ENCODE measurements at regions of chr3 and their contacts with region 1.

Region 1: DNA sequence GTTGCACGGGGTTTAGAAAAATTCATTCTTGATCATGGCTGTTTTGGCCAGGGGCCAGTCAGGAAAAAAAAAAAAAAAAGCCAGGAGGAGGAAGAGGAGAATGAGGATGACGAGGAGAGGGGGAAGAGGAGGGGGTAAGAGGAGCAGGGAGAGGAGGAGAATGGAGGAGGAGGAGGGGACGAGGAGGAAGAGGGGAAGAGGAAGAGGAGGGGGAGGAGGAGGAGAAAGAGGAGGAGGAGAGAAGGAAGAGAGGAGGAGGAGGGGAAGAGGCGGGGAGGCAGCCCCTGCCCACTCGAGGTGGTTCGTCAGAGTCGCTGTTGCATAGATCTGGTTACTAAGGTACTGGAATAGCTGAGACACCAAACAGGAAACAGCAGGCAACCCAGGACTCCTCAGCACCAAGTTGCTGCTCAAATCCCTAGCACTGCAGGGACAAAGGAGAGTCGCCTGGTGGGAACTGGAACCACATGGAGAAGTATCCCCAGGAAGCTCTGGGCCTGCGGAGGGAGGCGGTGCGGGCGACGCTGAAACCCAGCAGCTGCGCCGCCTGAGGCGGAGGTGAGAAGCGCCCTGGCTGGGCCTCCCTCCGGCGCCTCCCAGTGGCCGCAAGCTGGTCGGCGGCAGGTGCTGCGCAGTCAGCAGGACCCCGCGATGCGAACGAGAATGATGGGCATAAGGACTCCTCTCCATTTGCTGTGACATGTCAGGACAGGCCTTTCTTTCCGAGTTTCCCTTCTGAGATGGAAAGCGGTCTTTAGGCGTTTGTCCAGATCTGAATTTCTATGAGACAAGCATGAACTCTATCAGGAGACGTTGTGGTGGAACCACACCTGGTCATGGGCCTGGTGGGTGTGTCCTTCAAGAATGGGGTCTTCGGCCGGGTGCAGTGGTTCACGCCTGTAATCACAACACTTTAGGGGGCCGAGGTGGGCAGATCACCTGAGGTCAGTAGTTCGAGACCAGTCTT is 17.5 kb downstream of the FAM240A start:
- DNase-seq: peak; percentile 76
- ATAC-seq: peak; percentile 82
- H3K4me3 ChIP-seq: no peak overlapping the region
- H3K27ac ChIP-seq: peak overlapping the region; percentile 24
- H3K4me1 ChIP-seq: peaks cover 24% of the 10 kb centered on the region
- H3K27me3 ChIP-seq: no peaks in the 10 kb centered on the region; the same call in 1 of the 2 replicates
- CTCF ChIP-seq: peak; percentile 99
- POLR2A ChIP-seq: no peak
- RAD21 ChIP-seq: peak; percentile 82

Region 2: GRCh38 chr3:46496741-46497554 is 132.9 kb before region 1 on chr3:
- CTCF ChIA-PET with region 1: interaction called, 19 read pairs
- POLR2A ChIA-PET with region 1: interaction called, 3 read pairs
- dilution Hi-C with region 1: no loop called
- in situ Hi-C with region 1: no loop called
- intact Hi-C with region 1: no loop called
- DNase-seq: peak; percentile 46
- ATAC-seq: peak; percentile 38; the same call in 1 of the 2 replicates
- H3K4me3 ChIP-seq: no peak overlapping the region
- H3K27ac ChIP-seq: peak overlapping the region; percentile 82
- H3K4me1 ChIP-seq: peaks cover 29% of the 10 kb centered on the region
- H3K27me3 ChIP-seq: no peaks in the 10 kb centered on the region
- CTCF ChIP-seq: peak; percentile 43; the same call in 1 of the 2 replicates
- POLR2A ChIP-seq: no peak
- RAD21 ChIP-seq: peak; percentile 32; the same call in 1 of the 2 replicates

Region 3: DNA sequence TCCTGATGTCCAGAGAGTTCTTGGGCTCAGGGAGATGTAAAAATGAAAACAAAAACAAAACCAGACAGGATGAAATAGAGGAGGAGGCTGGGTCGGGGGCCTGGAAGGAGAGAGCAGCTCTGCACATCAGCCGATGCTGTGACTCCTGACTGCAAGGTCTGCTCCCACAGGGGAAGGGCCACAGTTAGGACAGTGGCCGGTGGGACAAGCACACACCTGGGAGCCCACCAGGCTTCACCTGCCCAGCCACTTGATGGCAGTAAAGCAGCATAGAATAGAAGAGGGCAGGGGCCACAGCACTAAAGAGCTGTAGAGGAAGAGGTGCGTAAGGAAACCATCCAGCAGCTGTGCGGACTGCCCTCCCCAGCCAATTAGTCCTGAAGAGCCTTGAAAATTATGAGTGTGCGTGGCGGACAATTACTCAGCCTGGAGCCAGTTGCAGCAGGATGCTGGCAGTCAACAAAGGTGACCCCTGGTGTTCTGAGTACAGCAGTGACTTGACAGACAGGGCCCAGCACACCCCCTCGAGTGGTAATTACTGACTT is 33.8 kb after region 1 on chr3:
- CTCF ChIA-PET with region 1: no interaction called
- POLR2A ChIA-PET with region 1: no interaction called
- dilution Hi-C with region 1: no loop called
- in situ Hi-C with region 1: no loop called
- intact Hi-C with region 1: no loop called
- DNase-seq: peak; percentile 46
- ATAC-seq: 0 out of 2 replicates have a peak, but pooled peaks have one; percentile 2
- H3K4me3 ChIP-seq: no peak overlapping the region
- H3K27ac ChIP-seq: peak overlapping the region; percentile 27; the same call in 1 of the 2 replicates
- H3K4me1 ChIP-seq: peaks cover 27% of the 10 kb centered on the region
- H3K27me3 ChIP-seq: peaks cover 3% of the 10 kb centered on the region; the same call in 1 of the 2 replicates
- CTCF ChIP-seq: 0 out of 2 replicates have a peak, but pooled peaks have one; percentile 6
- POLR2A ChIP-seq: no peak
- RAD21 ChIP-seq: no peak